Heart right ventricle (tissue), 16 donors: ENCODE measurements at regions of chrX and their contacts with region 1.

Region 1: GRCh38 chrX:30635630-30636029 is 17.6 kb upstream of the GK start:
- DNase-seq: no peak
- ATAC-seq: no peak
- H3K4me3 ChIP-seq: no peak overlapping the region
- H3K27ac ChIP-seq: no peak overlapping the region
- H3K4me1 ChIP-seq: peaks cover 0 to 8% (median 0%) of the 10 kb centered on the region in 9 donors
- H3K27me3 ChIP-seq: no peaks in the 10 kb centered on the region
- CTCF ChIP-seq: peak in 8 of 9 donors; percentile 16 to 44 (median 34)

Region 2: GRCh38 chrX:30521440-30522182 is 114.0 kb before region 1 on chrX:
- intact Hi-C with region 1: no loop called
- DNase-seq: no peak
- ATAC-seq: no peak
- H3K4me3 ChIP-seq: no peak overlapping the region
- H3K27ac ChIP-seq: no peak overlapping the region
- H3K4me1 ChIP-seq: no peaks in the 10 kb centered on the region
- H3K27me3 ChIP-seq: peaks cover 0 to 11% (median 0%) of the 10 kb centered on the region in 7 donors
- CTCF ChIP-seq: no peak

Region 3: GRCh38 chrX:30702736-30703135 is 67.1 kb after region 1 on chrX:
- intact Hi-C with region 1: loop called in 1 of 10 experiments (anchors 5 kb)
- DNase-seq: no peak
- ATAC-seq: no peak
- H3K4me3 ChIP-seq: no peak overlapping the region
- H3K27ac ChIP-seq: no peak overlapping the region
- H3K4me1 ChIP-seq: no peaks in the 10 kb centered on the region
- H3K27me3 ChIP-seq: peaks cover 0 to 10% (median 0%) of the 10 kb centered on the region in 7 donors
- CTCF ChIP-seq: no peak

Region 4: DNA sequence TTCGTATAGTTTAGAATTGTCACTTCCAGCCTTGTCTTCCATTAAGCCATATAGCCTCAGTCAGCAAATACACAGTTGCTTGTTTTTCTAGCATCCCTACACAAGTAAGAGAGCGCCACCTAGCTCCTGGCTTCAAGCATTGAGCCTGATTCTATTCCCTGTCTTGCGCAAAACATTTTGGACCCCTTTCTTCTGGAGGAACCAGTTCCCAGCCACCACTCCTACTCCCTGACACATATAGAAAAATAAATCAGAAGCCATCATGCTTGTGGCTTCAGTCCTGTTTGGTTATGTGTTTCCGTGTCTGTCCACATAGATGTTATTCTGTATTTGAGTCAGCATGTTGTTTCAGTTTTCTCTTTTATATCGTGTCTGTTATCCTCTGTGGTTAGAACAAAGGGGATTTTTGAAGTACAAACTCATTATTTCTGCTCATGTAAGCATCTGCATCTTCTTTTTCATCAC is 77.5 kb after region 1 on chrX:
- intact Hi-C with region 1: loop called in 4 of 10 experiments (anchors 5 to 10 kb)
- DNase-seq: peak in 1 of 2 donors; percentile 6
- ATAC-seq: peak in 2 of 8 donors; percentile 58 to 64
- H3K4me3 ChIP-seq: no peak overlapping the region
- H3K27ac ChIP-seq: no peak overlapping the region
- H3K4me1 ChIP-seq: no peaks in the 10 kb centered on the region
- H3K27me3 ChIP-seq: peaks cover 0 to 35% (median 0%) of the 10 kb centered on the region in 7 donors
- CTCF ChIP-seq: peak in 7 of 9 donors; percentile 41 to 63 (median 57)

Region 5: GRCh38 chrX:30762755-30763154 is 127.1 kb after region 1 on chrX:
- intact Hi-C with region 1: no loop called
- DNase-seq: no peak
- ATAC-seq: no peak
- H3K4me3 ChIP-seq: no peak overlapping the region
- H3K27ac ChIP-seq: no peak overlapping the region
- H3K4me1 ChIP-seq: no peaks in the 10 kb centered on the region
- H3K27me3 ChIP-seq: peaks cover 0 to 9% (median 0%) of the 10 kb centered on the region in 7 donors
- CTCF ChIP-seq: no peak